Activated naive CD4-positive, alpha-beta T cell treated with anti-CD3 and anti-CD28 coated beads for 36 hours (primary cell): ENCODE measurements at regions of chr10 and their contacts with region 1.

Region 1: DNA sequence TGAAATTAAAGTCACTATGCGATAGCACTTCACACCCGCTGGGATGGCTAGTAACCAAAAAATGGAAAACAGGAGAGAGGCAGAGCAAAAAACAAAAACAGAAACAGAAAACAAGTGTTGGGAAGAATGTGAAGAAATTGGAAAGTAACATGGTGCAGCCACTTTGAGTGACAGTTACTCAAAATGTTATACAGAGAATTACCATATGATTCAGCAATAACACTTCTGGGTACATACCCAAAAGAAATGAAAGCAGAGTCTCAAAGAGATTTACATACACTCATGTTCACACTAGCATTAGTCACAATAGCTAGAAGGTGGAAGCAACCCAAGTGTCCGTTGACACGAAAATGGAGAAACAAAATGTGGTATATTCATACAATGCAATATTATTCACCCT is 88.6 kb upstream of the KCNIP2 start:
- DNase-seq: peak; percentile 31
- H3K4me3 Mint-ChIP-seq: no peak overlapping the region
- H3K27ac Mint-ChIP-seq: no peak overlapping the region
- H3K4me1 Mint-ChIP-seq: peaks cover 12% of the 10 kb centered on the region
- H3K27me3 Mint-ChIP-seq: no peaks in the 10 kb centered on the region

Region 2: GRCh38 chr10:101972761-101973160 is 40.6 kb after region 1 on chr10:
- CTCF ChIA-PET with region 1: interaction called, 4 read pairs
- intact Hi-C with region 1: loop called (anchors 2 kb)
- DNase-seq: no peak
- H3K4me3 Mint-ChIP-seq: no peak overlapping the region
- H3K27ac Mint-ChIP-seq: no peak overlapping the region
- H3K4me1 Mint-ChIP-seq: peaks cover 41% of the 10 kb centered on the region
- H3K27me3 Mint-ChIP-seq: no peaks in the 10 kb centered on the region

Region 3: GRCh38 chr10:102016416-102016815 is 84.2 kb after region 1 on chr10:
- CTCF ChIA-PET with region 1: no interaction called
- intact Hi-C with region 1: no loop called
- DNase-seq: no peak
- H3K4me3 Mint-ChIP-seq: no peak overlapping the region
- H3K27ac Mint-ChIP-seq: no peak overlapping the region
- H3K4me1 Mint-ChIP-seq: no peaks in the 10 kb centered on the region
- H3K27me3 Mint-ChIP-seq: no peaks in the 10 kb centered on the region